Colonic mucosa (tissue), 4 donors: ENCODE measurements at regions of chr1 and their contacts with region 1.

Region 1: GRCh38 chr1:182962554-182963115 is 9.7 kb upstream of the SHCBP1L start:
- DNase-seq: peak; percentile 52
- H3K4me3 ChIP-seq: no peak overlapping the region
- H3K27ac ChIP-seq: no peak overlapping the region
- H3K4me1 ChIP-seq: no peaks in the 10 kb centered on the region
- H3K27me3 ChIP-seq: no peaks in the 10 kb centered on the region
- CTCF ChIP-seq: peak; percentile 72

Region 2: GRCh38 chr1:182720463-182720862 is 242.2 kb before region 1 on chr1:
- intact Hi-C with region 1: no loop called
- DNase-seq: no peak
- H3K4me3 ChIP-seq: no peak overlapping the region
- H3K27ac ChIP-seq: no peak overlapping the region
- H3K4me1 ChIP-seq: no peaks in the 10 kb centered on the region
- H3K27me3 ChIP-seq: no peaks in the 10 kb centered on the region
- CTCF ChIP-seq: no peak

Region 3: GRCh38 chr1:183023601-183024316 is 61.1 kb after region 1 on chr1:
- intact Hi-C with region 1: loop called (anchors 5 kb)
- DNase-seq: peak; percentile 81
- H3K4me3 ChIP-seq: peak overlapping the region; percentile 69
- H3K27ac ChIP-seq: peak overlapping the region; percentile 91
- H3K4me1 ChIP-seq: no peaks in the 10 kb centered on the region
- H3K27me3 ChIP-seq: no peaks in the 10 kb centered on the region
- CTCF ChIP-seq: peak; percentile 38

Region 4: GRCh38 chr1:183124259-183124658 is 161.6 kb after region 1 on chr1:
- intact Hi-C with region 1: no loop called
- DNase-seq: no peak
- H3K4me3 ChIP-seq: no peak overlapping the region
- H3K27ac ChIP-seq: no peak overlapping the region
- H3K4me1 ChIP-seq: no peaks in the 10 kb centered on the region
- H3K27me3 ChIP-seq: no peaks in the 10 kb centered on the region
- CTCF ChIP-seq: no peak

Region 5: DNA sequence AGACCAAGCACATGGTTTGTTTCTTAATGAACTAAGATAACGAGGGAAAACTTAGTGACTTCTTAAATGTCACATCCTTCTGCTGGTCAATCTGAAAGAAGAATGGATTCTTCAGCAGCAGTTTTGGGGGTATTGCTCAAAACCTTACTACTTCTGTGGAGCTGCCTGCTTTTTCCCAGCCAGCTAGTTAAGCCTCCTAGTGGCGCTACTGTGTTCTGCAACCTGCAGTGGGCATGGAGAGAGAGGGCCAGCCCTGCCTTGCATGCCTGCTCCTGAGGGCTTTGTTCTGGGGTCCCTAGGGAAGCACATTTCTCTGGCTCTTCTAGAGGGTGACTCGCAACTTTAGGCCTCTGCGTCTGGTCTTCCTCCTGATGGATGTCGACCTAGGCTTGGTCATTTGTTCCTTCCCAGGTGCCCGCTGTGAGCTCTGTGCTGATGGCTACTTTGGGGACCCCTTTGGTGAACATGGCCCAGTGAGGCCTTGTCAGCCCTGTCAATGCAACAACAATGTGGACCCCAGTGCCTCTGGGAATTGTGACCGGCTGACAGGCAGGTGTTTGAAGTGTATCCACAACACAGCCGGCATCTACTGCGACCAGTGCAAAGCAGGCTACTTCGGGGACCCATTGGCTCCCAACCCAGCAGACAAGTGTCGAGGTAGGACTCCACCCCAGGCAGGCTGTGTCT is 265.5 kb after region 1 on chr1:
- intact Hi-C with region 1: loop called (anchors 5 kb)
- DNase-seq: peak; percentile 65
- H3K4me3 ChIP-seq: no peak overlapping the region
- H3K27ac ChIP-seq: no peak overlapping the region
- H3K4me1 ChIP-seq: no peaks in the 10 kb centered on the region
- H3K27me3 ChIP-seq: no peaks in the 10 kb centered on the region
- CTCF ChIP-seq: peak; percentile 59